ENCODE measurements at regions of chr6 and their contacts with region 1.

Region 1: GRCh38 chr6:30914076-30914853 is at the start of gene VARS2:
- DNase-seq: peak; percentile 80
- ATAC-seq: peak; percentile 92
- H3K4me3 ChIP-seq: peak within 1 kb of the TSS; percentile 58 to 72
- H3K27ac ChIP-seq: peak within 1 kb of the TSS; percentile 71
- H3K4me1 ChIP-seq: peaks cover 9 to 26% of the 10 kb centered on the region in 2 experiments; a peak in 3 of 4 replicates
- H3K27me3 ChIP-seq: no peaks in the 10 kb centered on the region
- CTCF ChIP-seq: peak in 1 of 3 experiments; percentile 22; a peak in 2 of 6 replicates
- POLR2A ChIP-seq: peak; percentile 58
- RAD21 ChIP-seq: no peak
- total RNA-seq, gene VARS2: 39.8 TPM

Region 2: GRCh38 chr6:29926413-29927274 is 987.6 kb before region 1 on chr6:
- CTCF ChIA-PET with region 1: no interaction called
- POLR2A ChIA-PET with region 1: no interaction called
- RAD21 ChIA-PET with region 1: no interaction called
- intact Hi-C with region 1: no loop called
- DNase-seq: no peak
- ATAC-seq: no peak
- H3K4me3 ChIP-seq: no peak overlapping the region
- H3K27ac ChIP-seq: no peak overlapping the region
- H3K4me1 ChIP-seq: peaks cover 6 to 19% of the 10 kb centered on the region in 2 experiments
- H3K27me3 ChIP-seq: no peaks in the 10 kb centered on the region
- CTCF ChIP-seq: no peak
- POLR2A ChIP-seq: no peak
- RAD21 ChIP-seq: no peak

Region 3: DNA sequence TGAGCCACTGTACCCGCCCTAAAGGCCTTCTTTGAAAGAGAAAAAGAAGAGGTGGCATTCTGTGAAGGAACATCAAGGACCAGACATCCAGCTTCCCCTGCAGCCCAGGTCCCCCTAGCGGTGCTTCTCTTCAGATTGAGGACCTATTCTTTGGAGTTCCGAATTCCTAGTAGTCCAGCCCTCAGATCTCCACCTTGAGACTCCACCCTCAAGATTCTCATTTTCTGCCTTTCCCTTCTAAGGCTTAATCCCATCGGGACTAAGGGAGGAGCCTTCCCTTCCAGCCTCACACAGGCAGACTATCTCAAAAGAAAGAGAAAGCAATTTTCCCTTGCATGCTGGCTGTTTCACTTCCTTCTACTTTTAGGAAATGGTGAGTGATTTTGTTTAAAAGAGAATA is 128.5 kb after region 1 on chr6:
- CTCF ChIA-PET with region 1: interaction called, 16 read pairs
- POLR2A ChIA-PET with region 1: no interaction called
- RAD21 ChIA-PET with region 1: no interaction called
- intact Hi-C with region 1: no loop called
- DNase-seq: peak; percentile 74
- ATAC-seq: peak; percentile 94
- H3K4me3 ChIP-seq: no peak overlapping the region
- H3K27ac ChIP-seq: no peak overlapping the region
- H3K4me1 ChIP-seq: peaks cover 0 to 8% of the 10 kb centered on the region in 2 experiments; a peak in 2 of 4 replicates
- H3K27me3 ChIP-seq: no peaks in the 10 kb centered on the region
- CTCF ChIP-seq: peak; percentile 61 to 81 (median 74); a peak in 5 of 6 replicates
- POLR2A ChIP-seq: no peak
- RAD21 ChIP-seq: peak; percentile 82

Region 4: DNA sequence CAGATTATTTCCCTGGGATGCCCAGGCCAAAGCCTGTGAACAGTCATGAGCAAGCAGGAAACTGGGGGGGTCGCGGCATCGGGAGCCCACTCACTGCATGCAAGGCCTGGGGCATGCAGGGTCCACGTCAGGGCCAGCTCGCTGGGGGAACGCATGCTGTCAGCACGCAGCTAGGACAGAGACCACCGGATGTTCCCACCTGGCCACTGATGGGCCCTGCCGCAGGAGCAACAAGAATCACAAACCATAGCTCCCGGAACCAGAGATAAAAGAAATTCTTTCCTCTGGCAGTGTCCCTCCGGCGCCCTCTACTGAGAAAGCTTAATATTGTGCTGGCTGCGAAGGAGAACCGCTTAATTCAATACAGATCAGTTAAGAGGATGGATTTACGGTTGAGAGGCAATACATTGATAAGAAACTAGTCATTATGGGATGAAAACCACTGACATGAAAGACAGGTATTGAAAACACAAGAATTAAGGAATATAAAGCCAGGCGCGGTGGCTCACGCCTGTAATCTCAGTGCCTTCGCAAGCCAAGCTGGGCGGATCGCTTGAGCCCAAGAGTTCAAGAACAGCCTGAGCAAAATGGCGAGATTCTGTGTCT is 165.5 kb after region 1 on chr6:
- CTCF ChIA-PET with region 1: interaction called, 66 read pairs
- POLR2A ChIA-PET with region 1: no interaction called
- RAD21 ChIA-PET with region 1: interaction called, 6 to 8 read pairs
- intact Hi-C with region 1: loop called (anchors 1 kb)
- DNase-seq: peak; percentile 38
- ATAC-seq: peak; percentile 78
- H3K4me3 ChIP-seq: no peak overlapping the region
- H3K27ac ChIP-seq: no peak overlapping the region
- H3K4me1 ChIP-seq: peaks cover 0 to 18% of the 10 kb centered on the region in 2 experiments; a peak in 2 of 4 replicates
- H3K27me3 ChIP-seq: no peaks in the 10 kb centered on the region
- CTCF ChIP-seq: peak; percentile 79 to 90 (median 86)
- POLR2A ChIP-seq: no peak
- RAD21 ChIP-seq: peak; percentile 81

Region 5: DNA sequence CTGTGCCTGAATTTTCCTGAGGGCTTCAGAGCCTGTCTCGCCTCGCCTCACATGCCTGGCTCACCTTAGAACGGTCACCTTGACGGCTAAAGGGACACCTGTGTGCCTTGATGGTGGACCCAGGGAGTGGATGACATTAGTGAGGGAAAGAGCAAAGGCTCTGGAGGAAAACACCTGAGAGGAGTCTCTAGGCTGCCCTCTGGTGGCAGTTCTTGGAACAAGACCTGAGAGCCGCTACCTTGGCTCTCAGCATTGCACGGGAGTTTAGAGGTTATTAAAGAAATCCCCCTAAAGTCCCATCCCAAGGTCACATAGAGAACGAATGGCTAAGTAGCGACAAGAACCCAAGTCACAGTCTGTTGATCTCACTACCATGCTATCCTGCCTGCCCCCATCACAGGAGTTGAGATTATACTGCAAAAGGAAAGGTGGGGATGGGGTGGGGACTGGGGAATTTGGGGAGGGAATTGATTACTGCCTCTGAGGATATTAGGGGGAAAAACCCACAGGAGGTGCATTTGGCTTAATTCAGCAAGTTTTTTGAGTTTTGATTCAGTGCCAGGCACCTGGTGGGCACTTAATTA is 213.9 kb after region 1 on chr6:
- CTCF ChIA-PET with region 1: no interaction called
- POLR2A ChIA-PET with region 1: no interaction called
- RAD21 ChIA-PET with region 1: no interaction called
- intact Hi-C with region 1: loop called (anchors 1 kb)
- DNase-seq: no peak
- ATAC-seq: peak; percentile 75
- H3K4me3 ChIP-seq: no peak overlapping the region
- H3K27ac ChIP-seq: no peak overlapping the region
- H3K4me1 ChIP-seq: peaks cover 26 to 39% of the 10 kb centered on the region in 2 experiments
- H3K27me3 ChIP-seq: no peaks in the 10 kb centered on the region
- CTCF ChIP-seq: peak; percentile 62 to 89 (median 76); a peak in 5 of 6 replicates
- POLR2A ChIP-seq: no peak
- RAD21 ChIP-seq: peak; percentile 67

Measured in HCT116 (cell line).